ENCODE measurements at regions of chr3 and their contacts with region 1.

Region 1: GRCh38 chr3:49899815-49900214 is 3.9 kb downstream of the MST1R start:
- DNase-seq: peak; percentile 61
- ATAC-seq: peak; percentile 8
- H3K4me3 Mint-ChIP-seq: no peak overlapping the region
- H3K27ac Mint-ChIP-seq: no peak overlapping the region
- H3K4me1 Mint-ChIP-seq: peaks cover 7% of the 10 kb centered on the region
- H3K27me3 Mint-ChIP-seq: no peaks in the 10 kb centered on the region
- CTCF ChIP-seq: peak; percentile 32; the same call in 1 of the 2 replicates

Region 2: DNA sequence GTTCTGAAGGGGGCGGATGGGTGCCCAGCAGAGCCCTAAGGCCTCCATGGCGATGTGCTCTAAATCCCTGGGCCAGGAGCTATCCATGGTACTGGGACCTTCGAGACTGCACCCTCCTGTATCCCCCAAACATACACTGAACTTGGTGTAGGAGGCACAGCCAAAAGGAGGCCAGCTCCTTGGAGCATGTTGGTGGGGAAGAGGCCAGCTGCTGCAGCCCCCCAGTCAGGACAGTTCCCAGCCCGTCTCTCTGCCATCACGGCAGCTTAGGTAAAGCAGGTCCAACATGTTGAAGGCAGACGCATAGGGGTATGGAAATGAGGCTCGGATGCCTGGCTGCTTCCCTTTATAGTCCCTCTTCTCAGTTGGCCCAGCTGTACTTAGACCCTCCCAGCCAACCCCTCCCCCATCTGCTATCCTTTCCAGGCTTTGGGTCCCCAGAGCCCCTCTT is 31.9 kb before region 1 on chr3:
- CTCF ChIA-PET with region 1: interaction called, 10 read pairs
- POLR2A ChIA-PET with region 1: no interaction called
- DNase-seq: peak; percentile 78
- ATAC-seq: peak; percentile 56
- H3K4me3 Mint-ChIP-seq: peak overlapping the region; percentile 65
- H3K27ac Mint-ChIP-seq: peak overlapping the region; percentile 70; the same call in 1 of the 2 replicates
- H3K4me1 Mint-ChIP-seq: peaks cover 44% of the 10 kb centered on the region
- H3K27me3 Mint-ChIP-seq: peaks cover 4% of the 10 kb centered on the region
- CTCF ChIP-seq: no peak

Region 3: GRCh38 chr3:49882166-49882565 is 17.6 kb before region 1 on chr3:
- CTCF ChIA-PET with region 1: interaction called, 41 read pairs
- POLR2A ChIA-PET with region 1: interaction called, 3 read pairs
- DNase-seq: no peak
- ATAC-seq: no peak
- H3K4me3 Mint-ChIP-seq: no peak overlapping the region
- H3K27ac Mint-ChIP-seq: no peak overlapping the region; the same call in 1 of the 2 replicates
- H3K4me1 Mint-ChIP-seq: peaks cover 29% of the 10 kb centered on the region
- H3K27me3 Mint-ChIP-seq: no peaks in the 10 kb centered on the region
- CTCF ChIP-seq: no peak

Region 4: DNA sequence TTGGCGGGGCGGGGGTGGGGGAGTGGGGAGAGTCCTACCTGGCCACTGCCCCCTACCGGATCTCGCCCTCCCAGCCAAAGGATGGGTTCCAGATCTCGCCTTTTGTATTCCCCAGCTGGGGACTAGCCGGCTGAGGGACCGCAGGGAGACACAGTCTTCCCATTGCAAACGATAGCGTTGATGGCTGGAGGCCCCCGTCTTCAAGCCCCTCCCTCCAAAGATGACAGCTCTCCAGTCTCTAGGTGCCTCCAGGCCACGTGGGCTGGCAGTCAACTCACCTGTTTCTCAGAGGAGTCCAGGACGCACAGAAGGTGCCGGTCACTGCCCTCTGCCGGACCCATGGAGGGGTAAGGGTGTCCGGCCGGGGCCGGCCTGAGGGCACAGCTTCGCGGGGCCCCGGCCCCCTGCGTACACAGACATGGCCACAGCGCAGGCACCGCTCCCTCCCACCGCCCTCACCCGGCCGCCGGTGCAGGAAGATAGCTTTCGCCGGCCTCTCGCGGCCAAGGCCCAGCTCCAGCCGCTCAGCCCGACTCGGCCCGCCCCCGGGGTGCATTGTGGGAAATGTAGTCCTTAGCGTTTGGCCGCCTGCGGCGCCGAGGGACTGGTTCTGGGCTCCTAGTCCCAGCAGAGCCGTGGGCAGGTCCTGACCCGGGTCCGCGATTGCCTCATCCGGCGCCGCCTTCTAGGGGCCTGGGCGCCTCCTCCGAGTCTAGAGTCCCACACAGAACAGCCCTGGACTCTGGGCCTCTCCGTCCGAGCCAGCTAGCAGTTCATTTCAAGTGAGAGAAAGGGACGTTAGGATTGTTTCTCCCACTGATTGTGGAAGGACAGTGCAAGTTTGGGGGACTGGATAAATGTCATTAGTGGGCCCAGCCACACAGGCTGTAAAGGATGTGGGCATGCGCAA is 29.8 kb after region 1 on chr3 and contains the start of gene MON1A:
- CTCF ChIA-PET with region 1: interaction called, 24 read pairs
- POLR2A ChIA-PET with region 1: no interaction called
- DNase-seq: peak; percentile 99
- ATAC-seq: peak; percentile 87
- H3K4me3 Mint-ChIP-seq: peak within 1 kb of the TSS; percentile 90
- H3K27ac Mint-ChIP-seq: peak within 1 kb of the TSS; percentile 98
- H3K4me1 Mint-ChIP-seq: peaks cover 25% of the 10 kb centered on the region
- H3K27me3 Mint-ChIP-seq: no peaks in the 10 kb centered on the region
- CTCF ChIP-seq: no peak
- total RNA-seq, gene MON1A: 6.6 to 8.6 TPM (median 7.0 TPM) in 3 replicates

Measured in WTC11 (cell line).